ENCODE measurements at regions of chr12 and their contacts with region 1.

Region 1: GRCh38 chr12:49358483-49359141 is 8.7 kb upstream of the SPATS2 start:
- DNase-seq: peak; percentile 83
- ATAC-seq: peak; percentile 91
- H3K4me3 ChIP-seq: no peak overlapping the region
- H3K4me3 Mint-ChIP-seq: no peak overlapping the region
- H3K27ac ChIP-seq: no peak overlapping the region
- H3K27ac Mint-ChIP-seq: no peak overlapping the region
- H3K4me1 ChIP-seq: peaks cover 3 to 5% of the 10 kb centered on the region in 2 donors
- H3K4me1 Mint-ChIP-seq: peaks cover 2% of the 10 kb centered on the region
- H3K27me3 ChIP-seq: peaks cover 0 to 13% (median 7%) of the 10 kb centered on the region in 4 experiments
- H3K27me3 Mint-ChIP-seq: peaks cover 32% of the 10 kb centered on the region
- CTCF ChIP-seq: peak; percentile 85

Region 2: GRCh38 chr12:48592591-48593088 is 766.0 kb before region 1 on chr12:
- CTCF ChIA-PET with region 1: no interaction called
- POLR2A ChIA-PET with region 1: no interaction called
- intact Hi-C with region 1: no loop called
- DNase-seq: no peak
- ATAC-seq: no peak
- H3K4me3 ChIP-seq: no peak overlapping the region
- H3K4me3 Mint-ChIP-seq: no peak overlapping the region
- H3K27ac ChIP-seq: no peak overlapping the region
- H3K27ac Mint-ChIP-seq: no peak overlapping the region
- H3K4me1 ChIP-seq: no peaks in the 10 kb centered on the region
- H3K4me1 Mint-ChIP-seq: no peaks in the 10 kb centered on the region
- H3K27me3 ChIP-seq: peaks cover 0 to 6% (median 0%) of the 10 kb centered on the region in 4 experiments
- H3K27me3 Mint-ChIP-seq: peaks cover 31% of the 10 kb centered on the region
- CTCF ChIP-seq: no peak

Region 3: DNA sequence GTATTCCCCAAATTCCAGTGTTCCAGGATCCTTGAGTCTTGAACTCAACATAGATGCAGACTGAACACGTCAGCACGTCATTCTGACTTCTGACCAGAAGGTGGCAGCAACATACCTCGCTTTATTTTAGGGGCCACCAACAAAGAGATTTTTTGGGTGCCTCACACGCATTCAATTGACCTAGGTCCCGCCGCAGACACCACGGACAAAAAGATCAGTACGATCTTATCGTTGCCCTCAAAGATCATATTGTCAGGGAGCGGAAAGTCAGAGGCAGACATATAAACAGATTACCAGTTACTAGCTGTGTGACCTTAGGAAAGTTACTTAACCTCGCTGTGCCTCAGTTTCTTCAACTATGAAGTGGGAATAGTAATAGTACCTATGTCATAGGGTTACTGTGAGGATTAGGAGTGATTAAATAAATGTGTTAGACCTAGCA is 70.2 kb before region 1 on chr12:
- CTCF ChIA-PET with region 1: interaction called, 139 read pairs
- POLR2A ChIA-PET with region 1: no interaction called
- intact Hi-C with region 1: no loop called
- DNase-seq: peak; percentile 83
- ATAC-seq: peak; percentile 53
- H3K4me3 ChIP-seq: no peak overlapping the region
- H3K4me3 Mint-ChIP-seq: no peak overlapping the region
- H3K27ac ChIP-seq: no peak overlapping the region
- H3K27ac Mint-ChIP-seq: no peak overlapping the region
- H3K4me1 ChIP-seq: no peaks in the 10 kb centered on the region
- H3K4me1 Mint-ChIP-seq: no peaks in the 10 kb centered on the region
- H3K27me3 ChIP-seq: peaks cover 0 to 33% (median 5%) of the 10 kb centered on the region in 4 experiments
- H3K27me3 Mint-ChIP-seq: peaks cover 28% of the 10 kb centered on the region
- CTCF ChIP-seq: peak; percentile 95

Region 4: DNA sequence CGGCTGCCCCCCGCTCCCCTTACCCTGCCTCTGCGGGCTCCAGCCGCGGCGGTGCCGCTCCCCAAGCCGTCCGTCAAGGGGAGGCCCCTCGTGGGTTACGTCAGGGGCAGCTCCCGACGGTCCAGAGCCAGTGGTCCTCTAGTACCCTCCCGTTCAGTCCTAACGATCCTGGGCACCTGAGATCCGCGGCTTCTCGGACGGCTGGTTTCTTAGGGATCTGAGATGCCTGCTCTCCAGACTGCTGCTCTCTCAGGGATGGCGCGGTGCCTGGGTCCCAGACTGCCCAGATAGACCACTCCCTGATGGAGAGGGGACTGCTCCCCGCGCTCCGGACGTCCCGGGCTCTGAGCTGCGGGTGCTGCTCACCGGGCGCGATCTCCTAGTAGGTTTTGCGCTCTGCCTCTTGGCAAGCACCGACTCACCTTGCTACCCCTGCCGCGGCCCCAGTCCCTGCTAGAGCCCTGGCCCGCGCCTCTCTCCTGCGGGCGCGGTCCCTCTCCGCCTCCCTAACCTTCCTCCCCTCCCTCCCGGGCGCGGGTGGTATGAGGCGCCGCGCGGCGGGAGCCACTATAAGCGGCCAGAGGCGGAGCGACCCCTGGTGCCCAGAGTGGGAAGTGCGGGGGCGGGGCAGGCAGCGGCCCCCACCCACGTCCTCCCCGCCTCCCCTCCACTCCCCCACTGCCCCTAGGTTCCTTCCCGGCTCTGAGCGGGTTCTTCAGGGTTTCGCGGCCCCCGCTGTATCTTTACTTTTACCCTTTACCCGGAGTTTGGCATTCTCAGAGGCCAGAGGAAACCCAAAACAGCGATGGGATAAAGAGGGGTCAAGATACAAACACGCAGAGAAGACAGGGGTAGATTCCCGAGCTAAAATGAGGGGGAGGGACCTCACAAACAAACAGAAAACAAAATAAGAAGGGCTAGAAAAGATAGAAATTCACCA is 21.7 kb before region 1 on chr12 and contains the start of gene C1QL4:
- CTCF ChIA-PET with region 1: interaction called, 29 read pairs
- POLR2A ChIA-PET with region 1: no interaction called
- intact Hi-C with region 1: no loop called
- DNase-seq: peak; percentile 91
- ATAC-seq: peak; percentile 98
- H3K4me3 ChIP-seq: peak within 1 kb of the TSS in 4 of 5 experiments; percentile 21 to 50 (median 46)
- H3K4me3 Mint-ChIP-seq: peak within 1 kb of the TSS; percentile 80
- H3K27ac ChIP-seq: no peak within 1 kb of the TSS
- H3K27ac Mint-ChIP-seq: peak within 1 kb of the TSS; percentile 61
- H3K4me1 ChIP-seq: peaks cover 38 to 39% of the 10 kb centered on the region in 2 donors
- H3K4me1 Mint-ChIP-seq: peaks cover 38% of the 10 kb centered on the region
- H3K27me3 ChIP-seq: peaks cover 0 to 86% (median 49%) of the 10 kb centered on the region in 4 experiments
- H3K27me3 Mint-ChIP-seq: peaks cover 66% of the 10 kb centered on the region
- CTCF ChIP-seq: peak; percentile 99
- total RNA-seq, gene C1QL4: not detected in 2 replicates

Region 5: GRCh38 chr12:49388682-49389386 is 30.2 kb after region 1 on chr12:
- CTCF ChIA-PET with region 1: interaction called, 8 read pairs
- POLR2A ChIA-PET with region 1: no interaction called
- intact Hi-C with region 1: loop called (anchors 5 kb)
- DNase-seq: peak; percentile 63
- ATAC-seq: peak; percentile 93
- H3K4me3 ChIP-seq: peak overlapping the region in 2 of 5 experiments; percentile 20 to 36
- H3K4me3 Mint-ChIP-seq: peak overlapping the region; percentile 41
- H3K27ac ChIP-seq: no peak overlapping the region
- H3K27ac Mint-ChIP-seq: no peak overlapping the region
- H3K4me1 ChIP-seq: no peaks in the 10 kb centered on the region
- H3K4me1 Mint-ChIP-seq: peaks cover 5% of the 10 kb centered on the region
- H3K27me3 ChIP-seq: no peaks in the 10 kb centered on the region
- H3K27me3 Mint-ChIP-seq: no peaks in the 10 kb centered on the region
- CTCF ChIP-seq: peak; percentile 60

Region 6: DNA sequence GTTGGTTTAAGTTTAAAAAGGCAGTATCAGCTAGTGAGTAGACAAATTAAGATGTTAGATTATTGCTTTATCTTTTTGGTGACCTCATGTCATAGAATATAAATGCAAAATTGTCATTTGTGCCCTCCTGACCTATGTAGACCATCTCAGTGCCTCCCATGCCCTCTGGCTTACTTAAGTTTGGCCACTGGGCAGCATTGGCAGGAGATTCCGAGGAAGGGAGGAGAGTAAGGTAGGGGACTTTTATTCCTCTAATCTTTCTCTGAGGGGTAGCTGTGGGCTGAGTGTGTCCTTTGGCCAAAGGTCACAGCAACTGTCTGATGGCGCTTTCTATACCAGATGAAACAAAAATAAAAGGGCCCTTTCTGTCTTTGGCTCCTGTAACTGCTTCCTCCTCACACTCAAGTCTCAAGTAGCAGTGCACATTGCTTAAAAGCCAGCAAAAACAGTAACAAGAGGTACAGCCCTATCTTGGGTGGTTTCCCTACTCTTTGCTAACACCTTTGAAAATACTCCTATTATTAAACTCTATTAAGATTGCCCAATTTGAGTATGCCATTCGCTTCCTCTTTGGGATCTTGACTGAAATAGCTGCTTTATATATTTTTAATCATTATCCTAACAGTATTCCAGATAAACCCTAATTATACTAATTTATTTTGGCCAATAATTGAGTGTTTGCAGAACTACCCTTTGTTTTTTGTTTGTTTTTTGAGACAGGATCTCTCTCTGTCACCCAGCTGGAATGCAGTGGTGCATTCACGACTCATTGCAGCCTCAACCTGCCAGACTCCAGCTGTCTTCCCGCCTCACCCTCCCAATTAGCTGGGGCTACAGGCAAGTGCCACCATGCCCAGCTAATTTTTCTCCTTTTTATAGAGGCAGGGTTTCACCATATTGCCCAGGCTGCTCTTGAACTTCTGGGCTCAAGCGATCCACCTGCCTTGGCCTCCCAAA is 123.8 kb after region 1 on chr12:
- CTCF ChIA-PET with region 1: interaction called, 20 read pairs
- POLR2A ChIA-PET with region 1: no interaction called
- intact Hi-C with region 1: no loop called
- DNase-seq: no peak
- ATAC-seq: no peak
- H3K4me3 ChIP-seq: no peak overlapping the region
- H3K4me3 Mint-ChIP-seq: no peak overlapping the region
- H3K27ac ChIP-seq: no peak overlapping the region
- H3K27ac Mint-ChIP-seq: no peak overlapping the region
- H3K4me1 ChIP-seq: no peaks in the 10 kb centered on the region
- H3K4me1 Mint-ChIP-seq: peaks cover under 1% of the 10 kb centered on the region
- H3K27me3 ChIP-seq: no peaks in the 10 kb centered on the region
- H3K27me3 Mint-ChIP-seq: no peaks in the 10 kb centered on the region
- CTCF ChIP-seq: no peak

Region 7: GRCh38 chr12:49503674-49504180 is 145.1 kb after region 1 on chr12:
- CTCF ChIA-PET with region 1: interaction called, 729 read pairs
- POLR2A ChIA-PET with region 1: no interaction called
- intact Hi-C with region 1: no loop called
- DNase-seq: no peak
- ATAC-seq: no peak
- H3K4me3 ChIP-seq: no peak overlapping the region
- H3K4me3 Mint-ChIP-seq: no peak overlapping the region
- H3K27ac ChIP-seq: no peak overlapping the region
- H3K27ac Mint-ChIP-seq: no peak overlapping the region
- H3K4me1 ChIP-seq: peaks cover 0 to 2% of the 10 kb centered on the region in 2 donors
- H3K4me1 Mint-ChIP-seq: peaks cover 4% of the 10 kb centered on the region
- H3K27me3 ChIP-seq: no peaks in the 10 kb centered on the region
- H3K27me3 Mint-ChIP-seq: no peaks in the 10 kb centered on the region
- CTCF ChIP-seq: no peak

Region 8: DNA sequence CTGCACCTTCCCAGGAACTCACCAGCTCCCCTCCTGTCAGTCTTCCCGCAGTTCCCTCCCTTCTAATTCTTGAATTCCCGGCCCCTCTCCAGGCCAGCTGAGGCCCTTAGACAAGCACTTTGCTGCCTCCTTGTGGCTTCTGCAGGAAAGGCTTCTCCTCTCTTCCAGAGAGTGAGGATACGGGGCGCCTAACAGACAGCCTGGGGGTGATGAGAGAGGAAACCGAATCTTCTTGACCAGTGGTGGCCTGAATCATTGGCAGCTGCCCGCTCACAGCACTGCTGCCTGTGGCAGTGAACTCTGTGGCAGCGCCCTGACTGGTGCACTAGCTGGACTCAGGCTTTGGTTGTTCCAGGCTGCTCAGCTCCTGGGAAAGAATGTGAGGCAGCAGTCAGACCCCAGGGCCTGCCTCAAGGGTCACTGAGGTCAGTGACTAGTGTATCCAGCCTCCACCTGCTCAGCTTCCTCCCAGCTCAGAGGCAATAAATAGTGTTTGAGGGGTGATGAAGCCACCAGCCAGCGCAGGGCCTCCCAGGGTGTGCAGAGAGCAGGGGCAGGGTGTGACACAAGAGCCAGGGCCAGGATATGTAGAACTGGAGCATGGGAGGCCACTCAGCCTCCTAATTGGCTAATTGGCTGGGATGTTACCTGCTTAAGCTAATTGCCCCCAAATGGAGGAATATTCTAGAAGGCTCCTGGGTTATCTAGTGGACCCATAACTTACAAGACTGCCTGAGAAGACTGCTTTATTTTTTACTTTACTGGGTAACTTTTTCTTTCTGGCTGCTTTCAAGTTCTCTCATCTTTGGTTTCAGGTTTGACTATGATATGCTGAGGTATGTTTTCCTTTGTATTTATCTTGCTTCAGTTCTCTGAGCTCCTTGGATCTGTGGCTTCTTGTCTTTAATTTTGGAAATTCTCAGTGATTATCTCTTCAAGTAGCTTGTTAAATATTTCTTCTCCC is 222.2 kb after region 1 on chr12:
- CTCF ChIA-PET with region 1: interaction called, 34 read pairs
- POLR2A ChIA-PET with region 1: no interaction called
- intact Hi-C with region 1: loop called (anchors 1 kb)
- DNase-seq: peak; percentile 60
- ATAC-seq: peak; percentile 61
- H3K4me3 ChIP-seq: no peak overlapping the region
- H3K4me3 Mint-ChIP-seq: no peak overlapping the region
- H3K27ac ChIP-seq: no peak overlapping the region
- H3K27ac Mint-ChIP-seq: no peak overlapping the region
- H3K4me1 ChIP-seq: no peaks in the 10 kb centered on the region
- H3K4me1 Mint-ChIP-seq: peaks cover 5% of the 10 kb centered on the region
- H3K27me3 ChIP-seq: no peaks in the 10 kb centered on the region
- H3K27me3 Mint-ChIP-seq: no peaks in the 10 kb centered on the region
- CTCF ChIP-seq: peak; percentile 70

Measured in B cell (primary cell).